ENCODE measurements at regions of chr11 and their contacts with region 1.

Region 1: GRCh38 chr11:116782728-116783127 is 5.1 kb downstream of the ZPR1 start:
- DNase-seq: no peak
- ATAC-seq: no peak
- H3K4me3 Mint-ChIP-seq: no peak overlapping the region
- H3K27ac Mint-ChIP-seq: no peak overlapping the region
- H3K4me1 Mint-ChIP-seq: peaks cover 49% of the 10 kb centered on the region
- H3K27me3 Mint-ChIP-seq: no peaks in the 10 kb centered on the region

Region 2: GRCh38 chr11:116533186-116533825 is 249.4 kb before region 1 on chr11:
- CTCF ChIA-PET with region 1: no interaction called
- POLR2A ChIA-PET with region 1: no interaction called
- DNase-seq: no peak
- ATAC-seq: no peak
- H3K4me3 Mint-ChIP-seq: no peak overlapping the region
- H3K27ac Mint-ChIP-seq: no peak overlapping the region
- H3K4me1 Mint-ChIP-seq: no peaks in the 10 kb centered on the region
- H3K27me3 Mint-ChIP-seq: peaks cover 13% of the 10 kb centered on the region

Region 3: DNA sequence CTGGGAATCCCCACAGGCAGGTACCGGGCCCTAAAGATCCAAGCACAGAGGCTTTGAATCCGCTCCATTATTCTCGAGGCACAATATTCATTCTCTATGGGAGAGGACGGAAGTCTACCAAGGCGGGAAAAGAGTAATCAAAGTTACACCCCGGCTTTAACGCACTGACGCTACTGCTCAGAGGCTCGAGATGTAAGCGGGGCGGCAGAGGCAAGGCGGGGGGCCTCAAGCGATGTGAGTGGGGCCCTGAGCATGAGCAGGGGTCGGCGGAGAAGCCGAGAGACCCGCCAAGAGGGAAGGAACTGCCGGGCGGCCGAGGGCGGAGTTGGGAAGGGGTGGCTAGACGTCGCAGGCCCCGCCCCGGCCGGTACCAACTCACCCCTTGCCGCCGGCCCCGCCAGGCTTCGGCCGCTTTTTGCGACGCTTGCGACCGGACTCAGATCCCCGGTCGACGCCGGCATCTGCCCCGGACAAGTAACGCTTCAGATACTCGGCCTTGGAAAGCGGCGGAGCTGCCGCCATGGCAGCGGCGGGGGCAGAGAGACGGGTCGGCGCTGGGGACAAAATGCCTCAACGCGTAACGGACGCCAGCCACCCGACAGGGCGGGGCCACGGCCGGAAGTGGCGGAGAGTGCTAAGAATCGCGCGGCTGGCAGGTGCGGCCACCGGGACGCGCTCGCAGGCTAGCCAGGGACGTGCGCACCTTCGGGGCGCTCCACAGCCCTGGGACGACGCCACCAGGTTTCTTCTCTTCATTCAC is 10.1 kb before region 1 on chr11 and contains the start of gene BUD13:
- CTCF ChIA-PET with region 1: interaction called, 20 read pairs
- POLR2A ChIA-PET with region 1: interaction called, 44 read pairs
- DNase-seq: peak; percentile 95
- ATAC-seq: peak; percentile 93
- H3K4me3 Mint-ChIP-seq: peak within 1 kb of the TSS; percentile 97
- H3K27ac Mint-ChIP-seq: peak within 1 kb of the TSS; percentile 97
- H3K4me1 Mint-ChIP-seq: peaks cover 46% of the 10 kb centered on the region
- H3K27me3 Mint-ChIP-seq: no peaks in the 10 kb centered on the region
- total RNA-seq, gene BUD13: 36.3 to 39.5 TPM

Region 4: DNA sequence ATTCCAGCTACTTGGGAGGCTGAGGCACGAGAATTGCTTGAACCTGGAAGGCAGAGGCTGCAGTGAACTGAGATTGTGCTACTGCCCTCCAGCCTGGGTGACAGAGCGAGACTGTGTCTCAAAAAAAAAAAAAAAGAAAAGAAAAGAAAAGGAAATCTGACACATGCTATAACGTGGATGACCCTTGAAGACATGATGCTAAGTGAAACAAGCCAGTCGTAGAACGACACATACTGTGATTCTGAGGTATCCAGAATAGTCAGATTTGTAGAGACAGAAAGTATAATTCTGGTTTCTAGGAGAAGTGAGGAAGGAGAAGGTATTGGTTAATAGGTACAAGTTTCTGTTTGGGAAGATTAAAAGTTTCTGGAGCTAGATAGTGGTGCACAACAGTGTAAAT is 15.6 kb after region 1 on chr11:
- CTCF ChIA-PET with region 1: no interaction called
- POLR2A ChIA-PET with region 1: no interaction called
- DNase-seq: no peak
- ATAC-seq: no peak
- H3K4me3 Mint-ChIP-seq: no peak overlapping the region
- H3K27ac Mint-ChIP-seq: no peak overlapping the region
- H3K4me1 Mint-ChIP-seq: no peaks in the 10 kb centered on the region
- H3K27me3 Mint-ChIP-seq: peaks cover 21% of the 10 kb centered on the region

Region 5: DNA sequence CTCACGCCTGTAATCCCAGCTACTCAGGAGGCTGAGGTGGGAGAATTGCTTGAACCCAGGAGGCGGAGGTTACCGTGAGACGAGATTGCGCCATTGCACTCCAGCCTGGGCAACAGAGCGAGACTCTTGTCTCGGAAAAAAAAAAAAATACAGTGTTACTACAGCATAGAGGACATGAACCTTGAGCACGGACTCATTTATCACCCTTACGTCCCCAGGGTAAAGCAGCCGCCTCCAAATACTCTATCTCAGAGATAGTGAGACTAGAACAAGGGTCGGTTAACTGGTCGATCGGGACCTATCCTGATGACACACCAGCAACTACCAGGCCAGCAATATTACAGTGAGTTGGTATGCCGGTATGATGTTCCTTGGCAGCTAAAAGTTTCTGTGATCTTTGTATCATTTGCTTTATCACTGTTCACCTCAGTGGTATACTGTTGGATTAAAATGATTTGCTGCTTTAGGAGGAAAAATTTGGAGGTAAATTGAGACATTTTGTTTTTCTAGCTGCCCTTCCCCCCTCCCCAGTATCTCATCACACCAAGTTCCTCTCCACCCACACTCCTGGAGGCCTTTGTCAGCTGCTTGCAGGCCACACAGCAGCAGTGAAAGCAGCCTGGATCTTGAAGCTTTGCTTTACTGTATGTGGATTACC is 388.8 kb after region 1 on chr11:
- CTCF ChIA-PET with region 1: no interaction called
- POLR2A ChIA-PET with region 1: no interaction called
- DNase-seq: no peak
- ATAC-seq: no peak
- H3K4me3 Mint-ChIP-seq: no peak overlapping the region
- H3K27ac Mint-ChIP-seq: peak overlapping the region; percentile 11
- H3K4me1 Mint-ChIP-seq: peaks cover 11% of the 10 kb centered on the region
- H3K27me3 Mint-ChIP-seq: no peaks in the 10 kb centered on the region

Measured in activated CD8-positive, alpha-beta T cell treated with anti-CD3 and anti-CD28 coated beads, Interleukin-2, amount 10 ng/mL, durations not matched to agents 7 days and 5 days (primary cell).